MCF 10A (cell line): ENCODE measurements at regions of chr10 and their contacts with region 1.

Region 1: DNA sequence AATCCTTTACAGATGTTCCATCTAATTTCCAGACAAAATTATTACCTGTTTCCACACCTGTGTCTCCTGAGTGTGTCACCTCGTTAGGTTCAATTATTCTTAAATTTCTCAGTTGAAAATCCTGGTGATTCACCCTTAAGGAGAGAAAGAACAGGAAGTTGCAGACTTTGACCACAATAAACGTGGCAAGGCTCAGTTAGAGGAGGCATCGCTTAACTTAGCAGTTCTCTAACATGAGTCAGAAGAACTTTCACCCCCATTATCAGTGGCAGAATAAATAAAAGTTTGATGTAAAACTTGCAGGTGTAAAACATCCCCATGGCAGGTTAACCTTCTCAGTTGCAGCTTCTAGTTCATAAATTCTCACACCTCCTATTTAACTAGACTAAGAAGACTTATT is 8.3 kb downstream of the XPNPEP1 start:
- DNase-seq: peak; percentile 88
- H3K4me3 Mint-ChIP-seq: peak overlapping the region; percentile 33
- H3K27ac Mint-ChIP-seq: peak overlapping the region; percentile 89
- H3K4me1 Mint-ChIP-seq: peaks cover 44% of the 10 kb centered on the region
- H3K27me3 Mint-ChIP-seq: no peaks in the 10 kb centered on the region
- CTCF ChIP-seq: no peak

Region 2: DNA sequence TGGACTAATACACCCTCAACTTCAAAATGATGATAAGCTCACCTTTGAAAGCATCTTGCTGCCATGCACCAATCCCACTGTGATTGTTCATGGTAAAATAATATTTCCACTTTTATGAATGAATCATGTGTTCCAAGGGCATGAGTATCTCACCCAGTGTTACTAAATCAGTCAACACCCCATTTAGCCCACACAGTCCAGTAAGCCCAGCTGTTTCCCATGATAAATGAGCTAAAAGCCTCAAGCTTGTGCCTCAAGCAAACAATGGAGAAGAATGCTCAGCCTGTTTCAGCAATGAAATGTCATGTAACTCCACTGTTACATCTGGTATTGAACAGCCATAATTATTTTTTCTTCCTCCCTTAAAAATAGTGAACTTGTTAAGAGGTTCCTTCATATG is 434.1 kb before region 1 on chr10:
- CTCF ChIA-PET with region 1: no interaction called
- POLR2A ChIA-PET with region 1: no interaction called
- intact Hi-C with region 1: no loop called
- DNase-seq: no peak
- H3K4me3 Mint-ChIP-seq: no peak overlapping the region
- H3K27ac Mint-ChIP-seq: no peak overlapping the region
- H3K4me1 Mint-ChIP-seq: no peaks in the 10 kb centered on the region
- H3K27me3 Mint-ChIP-seq: no peaks in the 10 kb centered on the region
- CTCF ChIP-seq: no peak

Region 3: DNA sequence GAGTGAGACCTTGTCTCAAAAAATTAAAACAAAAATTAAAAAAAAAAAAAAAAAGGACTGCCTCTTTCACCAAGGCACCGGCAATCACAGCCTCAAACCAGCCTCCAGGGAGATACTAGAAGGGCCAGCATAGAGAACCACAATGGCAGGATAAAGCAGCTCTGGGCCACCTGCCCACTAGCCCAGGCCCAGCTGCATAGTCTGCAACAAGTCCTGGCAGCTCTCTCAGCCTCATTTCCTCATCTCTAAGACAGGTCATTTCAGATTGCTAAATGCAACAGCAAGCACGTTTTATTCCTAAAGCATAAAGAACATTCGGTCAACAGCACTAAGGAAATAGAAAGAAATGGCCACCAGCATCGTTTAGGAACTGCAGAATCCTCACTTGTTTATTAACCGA is 20.4 kb before region 1 on chr10:
- CTCF ChIA-PET with region 1: interaction called, 12 read pairs
- POLR2A ChIA-PET with region 1: interaction called, 122 read pairs
- intact Hi-C with region 1: loop called (anchors 2 kb)
- DNase-seq: peak; percentile 90
- H3K4me3 Mint-ChIP-seq: peak overlapping the region; percentile 31
- H3K27ac Mint-ChIP-seq: peak overlapping the region; percentile 83
- H3K4me1 Mint-ChIP-seq: peaks cover 38% of the 10 kb centered on the region
- H3K27me3 Mint-ChIP-seq: no peaks in the 10 kb centered on the region
- CTCF ChIP-seq: no peak

Region 4: DNA sequence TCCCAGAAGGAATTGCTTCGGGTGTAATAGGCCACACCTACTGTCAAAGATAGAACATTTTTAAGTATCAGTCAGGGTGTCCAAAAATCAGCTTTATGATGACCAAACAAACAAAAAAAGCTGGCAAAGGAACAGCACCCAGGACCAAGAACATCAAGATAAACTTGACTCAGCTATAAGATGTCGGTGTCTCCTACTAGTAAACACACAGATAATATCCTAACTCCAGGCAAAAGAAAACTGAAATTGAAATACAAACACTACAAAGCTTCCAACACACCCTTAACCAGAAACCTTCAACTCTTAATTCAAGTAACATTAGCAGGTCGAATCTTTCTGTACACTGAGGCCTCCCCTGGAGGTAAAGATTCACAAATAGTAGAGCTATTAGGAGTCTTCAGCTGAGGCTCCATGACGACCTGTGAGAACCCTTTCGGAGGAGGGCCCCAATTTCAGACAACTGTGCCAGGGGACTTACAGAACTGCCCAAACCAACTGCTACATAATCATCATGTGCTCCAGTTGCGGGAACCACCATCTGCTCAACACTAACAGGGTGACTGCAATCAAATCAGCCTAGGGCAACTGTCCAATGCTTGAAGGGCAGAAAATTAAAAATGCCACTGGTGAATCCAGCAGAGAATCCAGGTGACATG is 11.9 kb before region 1 on chr10:
- CTCF ChIA-PET with region 1: interaction called, 12 read pairs
- POLR2A ChIA-PET with region 1: interaction called, 122 read pairs
- intact Hi-C with region 1: no loop called
- DNase-seq: no peak
- H3K4me3 Mint-ChIP-seq: peak overlapping the region; percentile 59
- H3K27ac Mint-ChIP-seq: peak overlapping the region; percentile 96
- H3K4me1 Mint-ChIP-seq: peaks cover 64% of the 10 kb centered on the region
- H3K27me3 Mint-ChIP-seq: no peaks in the 10 kb centered on the region
- CTCF ChIP-seq: no peak

Region 5: GRCh38 chr10:109929501-109930219 is 14.7 kb after region 1 on chr10:
- CTCF ChIA-PET with region 1: interaction called, 3 read pairs
- POLR2A ChIA-PET with region 1: interaction called, 11 read pairs
- intact Hi-C with region 1: no loop called
- DNase-seq: peak; percentile 71
- H3K4me3 Mint-ChIP-seq: no peak overlapping the region
- H3K27ac Mint-ChIP-seq: no peak overlapping the region
- H3K4me1 Mint-ChIP-seq: peaks cover 44% of the 10 kb centered on the region
- H3K27me3 Mint-ChIP-seq: no peaks in the 10 kb centered on the region
- CTCF ChIP-seq: no peak

Region 6: GRCh38 chr10:110007701-110008517 is 92.9 kb after region 1 on chr10 and contains the start of gene ADD3:
- CTCF ChIA-PET with region 1: interaction called, 4 read pairs
- POLR2A ChIA-PET with region 1: interaction called, 13 read pairs
- intact Hi-C with region 1: no loop called
- DNase-seq: peak; percentile 84
- H3K4me3 Mint-ChIP-seq: no peak within 1 kb of the TSS
- H3K27ac Mint-ChIP-seq: peak within 1 kb of the TSS; percentile 19
- H3K4me1 Mint-ChIP-seq: peaks cover 17% of the 10 kb centered on the region
- H3K27me3 Mint-ChIP-seq: no peaks in the 10 kb centered on the region
- CTCF ChIP-seq: no peak
- total RNA-seq, gene ADD3: 11.2 and 14.5 TPM in 2 replicates